Transverse colon (tissue), 4 donors: ENCODE measurements at regions of chr22 and their contacts with region 1.

Region 1: GRCh38 chr22:46845296-46846149 is 83.1 kb downstream of the TBC1D22A start:
- DNase-seq: no peak
- H3K4me3 ChIP-seq: no peak overlapping the region
- H3K27ac ChIP-seq: no peak overlapping the region
- H3K4me1 ChIP-seq: peaks cover 0 to 8% (median 3%) of the 10 kb centered on the region in 4 donors
- H3K27me3 ChIP-seq: no peaks in the 10 kb centered on the region
- CTCF ChIP-seq: peak in 4 of 5 experiments; percentile 13 to 34 (median 26)
- EP300 ChIP-seq: no peak
- POLR2A ChIP-seq: no peak

Region 2: GRCh38 chr22:46714550-46714949 is 131.0 kb before region 1 on chr22:
- in situ Hi-C with region 1: no loop called
- intact Hi-C with region 1: no loop called
- DNase-seq: no peak
- H3K4me3 ChIP-seq: no peak overlapping the region
- H3K27ac ChIP-seq: peak overlapping the region in 1 of 4 donors; percentile 23
- H3K4me1 ChIP-seq: peaks cover 0 to 9% (median 0%) of the 10 kb centered on the region in 4 donors
- H3K27me3 ChIP-seq: no peaks in the 10 kb centered on the region
- CTCF ChIP-seq: no peak
- EP300 ChIP-seq: no peak
- POLR2A ChIP-seq: no peak

Region 3: GRCh38 chr22:48492366-48493320 is 1647.1 kb after region 1 on chr22:
- in situ Hi-C with region 1: loop called in 1 of 4 experiments (anchors 25 kb)
- intact Hi-C with region 1: no loop called
- DNase-seq: peak; percentile 50
- H3K4me3 ChIP-seq: no peak overlapping the region
- H3K27ac ChIP-seq: no peak overlapping the region
- H3K4me1 ChIP-seq: peaks cover 0 to 10% (median 4%) of the 10 kb centered on the region in 4 donors
- H3K27me3 ChIP-seq: peaks cover 44% of the 10 kb centered on the region
- CTCF ChIP-seq: peak; percentile 62 to 82 (median 75)
- EP300 ChIP-seq: no peak
- POLR2A ChIP-seq: no peak